Activated B cell treated with CpG ODN at 0.5 μM for 24 hours (primary cell): ENCODE measurements at regions of chr9 and their contacts with region 1.

Region 1: DNA sequence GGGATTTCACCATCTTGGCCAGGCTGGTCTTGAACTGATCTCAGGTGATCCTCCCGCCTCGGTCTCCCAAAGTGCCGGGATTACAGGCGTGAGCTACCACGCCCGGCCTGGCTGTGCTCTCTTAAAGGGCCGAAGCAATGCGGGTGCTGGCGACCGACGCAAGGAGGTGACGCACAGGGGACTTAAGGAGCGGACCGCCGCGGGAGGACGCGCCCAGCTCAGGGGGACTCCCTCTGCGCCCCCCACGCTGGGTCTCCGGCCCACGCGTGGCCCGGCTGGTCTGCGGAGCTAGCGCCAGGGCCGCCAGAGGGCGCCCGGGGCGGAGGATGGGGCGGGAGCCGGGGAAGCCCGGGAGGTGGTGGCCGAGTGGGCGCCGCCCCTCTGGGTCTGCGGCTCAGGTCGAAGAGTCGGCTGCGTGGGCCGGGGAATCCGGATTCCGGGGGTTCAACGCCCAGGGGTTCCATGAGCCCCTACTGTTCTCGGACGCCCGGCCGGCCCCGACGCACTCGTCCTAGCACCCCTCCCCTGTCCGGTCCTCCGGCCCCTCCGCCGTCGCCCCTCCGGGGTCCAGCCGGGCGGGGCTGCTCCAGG is 502 bp upstream of the CERCAM start:
- DNase-seq: peak; percentile 81
- ATAC-seq: peak; percentile 89
- H3K4me3 Mint-ChIP-seq: peak overlapping the region; percentile 75
- H3K27ac Mint-ChIP-seq: no peak overlapping the region
- H3K4me1 Mint-ChIP-seq: peaks cover 8% of the 10 kb centered on the region
- H3K27me3 Mint-ChIP-seq: peaks cover 19% of the 10 kb centered on the region
- CTCF ChIP-seq: no peak

Region 2: DNA sequence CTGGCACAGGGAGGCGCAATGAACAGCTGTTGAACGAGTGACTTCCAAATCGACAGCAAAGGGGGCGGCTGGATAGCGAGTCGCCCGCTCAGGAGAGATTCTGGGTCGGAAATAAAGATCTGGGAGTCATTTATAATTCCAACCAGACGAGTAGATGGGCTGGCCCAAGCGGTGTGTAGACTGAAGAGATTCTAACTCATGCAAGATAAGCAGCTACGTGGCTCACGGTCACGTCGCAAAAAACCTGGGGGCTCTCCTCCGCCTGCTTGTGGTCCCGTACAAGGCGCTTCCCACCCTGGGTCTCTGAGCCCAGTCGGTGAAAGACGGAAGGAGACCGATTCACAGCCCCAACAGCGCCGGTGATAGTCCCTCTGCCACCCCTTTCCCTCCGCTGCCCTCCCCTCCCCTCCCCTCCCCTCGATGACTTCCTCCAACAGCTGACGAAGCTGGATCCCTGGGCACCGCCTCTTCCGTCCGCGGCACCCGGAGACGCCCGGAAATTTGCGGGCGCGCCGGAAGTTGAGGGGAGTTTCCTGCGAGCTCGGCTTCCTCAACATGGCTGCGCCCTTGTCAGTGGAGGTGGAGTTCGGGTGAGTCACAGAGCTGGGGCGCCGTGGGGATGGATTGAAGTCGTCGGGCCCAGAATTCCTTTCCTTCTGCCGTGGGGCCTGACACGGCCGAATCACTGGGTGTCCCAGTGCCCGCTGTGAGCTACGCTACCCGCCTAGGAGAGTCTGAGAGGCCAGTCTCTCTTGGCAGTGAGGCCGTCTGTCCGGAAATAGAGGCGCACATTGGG is 49.1 kb before region 1 on chr9 and contains the start of gene URM1:
- CTCF ChIA-PET with region 1: interaction called, 4 read pairs
- POLR2A ChIA-PET with region 1: interaction called, 4 read pairs
- intact Hi-C with region 1: loop called (anchors 1 kb)
- DNase-seq: peak; percentile 96
- ATAC-seq: peak; percentile 91
- H3K4me3 Mint-ChIP-seq: peak within 1 kb of the TSS; percentile 97
- H3K27ac Mint-ChIP-seq: peak within 1 kb of the TSS; percentile 94
- H3K4me1 Mint-ChIP-seq: peaks cover 31% of the 10 kb centered on the region
- H3K27me3 Mint-ChIP-seq: no peaks in the 10 kb centered on the region
- CTCF ChIP-seq: no peak
- total RNA-seq, gene URM1: 55.8 and 65.1 TPM in 2 replicates

Region 3: GRCh38 chr9:128438343-128439109 is 18.4 kb after region 1 on chr9:
- CTCF ChIA-PET with region 1: interaction called, 7 read pairs
- POLR2A ChIA-PET with region 1: no interaction called
- intact Hi-C with region 1: loop called (anchors 2 kb)
- DNase-seq: peak; percentile 77
- ATAC-seq: peak; percentile 97
- H3K4me3 Mint-ChIP-seq: no peak overlapping the region
- H3K27ac Mint-ChIP-seq: no peak overlapping the region
- H3K4me1 Mint-ChIP-seq: peaks cover 5% of the 10 kb centered on the region
- H3K27me3 Mint-ChIP-seq: no peaks in the 10 kb centered on the region
- CTCF ChIP-seq: peak; percentile 16

Region 4: DNA sequence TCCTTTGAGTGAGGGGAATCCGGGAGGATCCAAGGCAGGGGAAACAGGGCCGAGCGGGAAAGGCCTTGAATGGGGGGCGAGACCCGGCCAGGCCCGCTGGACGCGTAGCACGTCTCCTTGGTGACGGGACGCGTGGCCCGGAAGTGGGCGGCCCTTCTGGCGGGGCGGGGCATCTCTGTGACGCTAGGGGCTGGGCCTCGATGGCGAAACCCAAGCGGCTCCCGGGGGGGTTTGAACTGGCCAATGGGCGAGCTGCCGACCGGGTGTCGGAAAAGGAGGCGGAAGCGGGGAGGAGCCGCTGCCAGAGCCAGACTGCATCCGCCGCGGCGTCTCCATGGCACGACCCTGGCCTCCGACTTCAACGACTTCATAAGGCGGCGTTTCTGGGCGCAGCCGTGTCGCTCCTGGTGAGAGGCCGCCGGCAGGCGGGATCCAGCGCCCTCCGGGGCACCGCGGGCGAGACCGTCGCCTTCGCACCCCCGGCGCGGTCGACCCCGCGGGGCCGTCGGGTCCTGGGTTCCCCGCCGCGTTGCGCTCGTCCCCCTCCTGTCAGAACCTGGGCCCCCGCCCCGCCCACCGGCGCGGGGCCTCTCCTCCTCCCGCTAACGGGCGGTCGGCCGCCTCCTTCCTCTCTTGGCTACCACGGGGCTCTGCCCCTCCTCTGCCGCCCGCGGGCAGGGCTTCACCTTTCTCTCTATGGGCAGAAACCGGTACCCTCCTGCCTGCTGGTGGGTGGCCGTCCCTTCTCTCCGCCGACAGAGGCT is 35.9 kb after region 1 on chr9 and contains the start of gene ODF2:
- CTCF ChIA-PET with region 1: interaction called, 3 read pairs
- POLR2A ChIA-PET with region 1: interaction called, 3 read pairs
- intact Hi-C with region 1: loop called (anchors 1 kb)
- DNase-seq: peak; percentile 99
- ATAC-seq: peak; percentile 88
- H3K4me3 Mint-ChIP-seq: peak within 1 kb of the TSS; percentile 88
- H3K27ac Mint-ChIP-seq: peak within 1 kb of the TSS; percentile 83
- H3K4me1 Mint-ChIP-seq: peaks cover 14% of the 10 kb centered on the region
- H3K27me3 Mint-ChIP-seq: no peaks in the 10 kb centered on the region
- CTCF ChIP-seq: no peak
- total RNA-seq, gene ODF2: 41.2 and 45.7 TPM in 2 replicates

Region 5: GRCh38 chr9:128494108-128494745 is 74.1 kb after region 1 on chr9:
- CTCF ChIA-PET with region 1: no interaction called
- POLR2A ChIA-PET with region 1: no interaction called
- intact Hi-C with region 1: no loop called
- DNase-seq: no peak
- ATAC-seq: peak; percentile 37
- H3K4me3 Mint-ChIP-seq: no peak overlapping the region
- H3K27ac Mint-ChIP-seq: peak overlapping the region; percentile 18
- H3K4me1 Mint-ChIP-seq: peaks cover 8% of the 10 kb centered on the region
- H3K27me3 Mint-ChIP-seq: no peaks in the 10 kb centered on the region
- CTCF ChIP-seq: no peak